Ascending aorta (tissue), 2 donors: ENCODE measurements at regions of chr21 and their contacts with region 1.

Region 1: GRCh38 chr21:46323227-46324128 is at the start of gene C21orf58:
- DNase-seq: peak; percentile 92 to 99
- H3K4me3 ChIP-seq: peak within 1 kb of the TSS; percentile 81 to 98
- H3K27ac ChIP-seq: peak within 1 kb of the TSS; percentile 97
- H3K4me1 ChIP-seq: peaks cover 15 to 20% of the 10 kb centered on the region in 2 donors
- H3K27me3 ChIP-seq: no peaks in the 10 kb centered on the region
- CTCF ChIP-seq: peak in 1 of 3 experiments; percentile 4
- total RNA-seq, gene C21orf58: 3.2 TPM

Region 2: DNA sequence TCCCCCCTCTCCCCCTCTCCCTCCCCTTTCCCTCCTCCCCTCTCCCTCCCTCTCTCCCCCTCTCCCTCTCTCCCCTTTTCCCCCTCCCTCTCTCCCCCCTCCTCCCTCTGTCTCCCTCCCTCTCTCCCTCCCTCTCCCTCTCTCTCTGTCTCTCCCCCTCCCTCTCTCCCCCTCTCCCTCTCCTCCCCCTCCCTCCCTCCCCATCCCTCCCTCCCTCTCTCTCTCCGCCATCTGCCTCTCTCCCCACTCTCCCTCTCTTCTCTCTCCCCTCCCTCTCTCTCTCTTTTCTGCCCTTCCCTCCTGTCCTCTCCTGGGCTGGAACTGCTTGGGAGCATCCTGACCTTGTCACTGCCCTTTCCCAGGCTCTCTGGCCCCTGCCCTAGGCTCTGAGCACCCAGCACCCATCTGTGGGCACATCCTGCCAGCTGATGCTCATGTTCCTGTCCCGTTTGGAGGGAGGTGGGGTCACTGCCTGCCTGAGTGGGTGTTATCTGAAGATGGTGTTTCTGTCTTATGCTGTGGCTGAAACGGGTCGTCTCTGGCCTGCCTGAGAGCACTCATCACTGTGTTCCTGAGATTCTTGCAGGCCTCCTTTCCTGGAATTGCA is 178.9 kb before region 1 on chr21:
- intact Hi-C with region 1: loop called (anchors 10 kb)
- DNase-seq: no peak
- H3K4me3 ChIP-seq: no peak overlapping the region
- H3K27ac ChIP-seq: no peak overlapping the region
- H3K4me1 ChIP-seq: no peaks in the 10 kb centered on the region
- H3K27me3 ChIP-seq: no peaks in the 10 kb centered on the region
- CTCF ChIP-seq: no peak

Region 3: DNA sequence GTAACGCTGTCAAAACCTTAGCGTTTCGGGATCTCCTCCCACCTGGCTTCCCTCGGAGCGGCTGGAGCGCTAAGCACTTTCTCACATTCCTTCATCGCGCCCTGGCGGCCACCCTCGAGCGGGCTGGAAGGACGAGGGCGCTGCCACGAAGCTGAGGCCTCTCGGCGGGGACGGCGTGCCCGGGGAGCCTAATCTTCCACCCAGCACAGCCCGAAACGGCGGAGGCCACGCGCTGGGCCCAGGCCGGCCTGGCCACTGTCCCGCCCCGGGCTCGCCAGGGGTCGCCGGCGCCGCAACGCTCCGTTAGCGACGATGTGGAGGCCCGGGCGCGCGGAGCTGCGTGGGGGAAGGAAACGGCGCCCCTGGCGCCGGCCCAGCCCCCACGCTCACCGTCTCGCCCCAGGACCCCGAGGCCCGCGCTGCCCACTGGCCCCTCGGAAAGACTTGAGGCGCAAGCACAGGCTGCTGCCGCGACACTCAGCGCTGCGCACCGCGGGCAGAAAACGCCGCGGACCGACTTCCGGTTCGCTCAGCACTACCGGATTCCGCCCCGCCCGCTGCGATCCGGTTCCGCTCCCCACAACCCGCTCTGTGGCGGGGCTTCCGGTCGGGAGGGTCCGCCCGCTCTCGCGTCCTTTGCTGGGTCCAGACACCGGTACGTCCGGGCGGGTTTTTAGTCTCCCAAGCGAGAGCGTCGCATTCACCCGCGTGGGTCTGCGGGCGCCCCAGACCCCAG is 37.5 kb before region 1 on chr21 and contains the start of gene YBEY:
- intact Hi-C with region 1: loop called (anchors 1 kb)
- DNase-seq: peak; percentile 38 to 92
- H3K4me3 ChIP-seq: peak within 1 kb of the TSS; percentile 72 to 92
- H3K27ac ChIP-seq: peak within 1 kb of the TSS; percentile 92 to 96
- H3K4me1 ChIP-seq: peaks cover 19 to 30% of the 10 kb centered on the region in 2 donors
- H3K27me3 ChIP-seq: no peaks in the 10 kb centered on the region
- CTCF ChIP-seq: peak; percentile 18 to 43 (median 34)
- total RNA-seq, gene YBEY: 0.53 TPM

Region 4: GRCh38 chr21:46458315-46459023 is 135.0 kb after region 1 on chr21 and contains the start of gene DIP2A:
- intact Hi-C with region 1: loop called (anchors 1 kb)
- DNase-seq: peak; percentile 82 to 97
- H3K4me3 ChIP-seq: peak within 1 kb of the TSS; percentile 89 to 99
- H3K27ac ChIP-seq: peak within 1 kb of the TSS; percentile 80 to 83
- H3K4me1 ChIP-seq: peaks cover 0 to 18% of the 10 kb centered on the region in 2 donors
- H3K27me3 ChIP-seq: no peaks in the 10 kb centered on the region
- CTCF ChIP-seq: peak in 2 of 3 experiments; percentile 8 to 23
- total RNA-seq, gene DIP2A: 72.8 TPM